ENCODE measurements at regions of chr6 and their contacts with region 1.

Region 1: GRCh38 chr6:141988954-141989705 is 143.6 kb upstream of the GJE1 start:
- DNase-seq: peak; percentile 39 to 45
- H3K4me3 ChIP-seq: no peak overlapping the region
- H3K27ac ChIP-seq: no peak overlapping the region
- H3K4me1 ChIP-seq: no peaks in the 10 kb centered on the region
- H3K27me3 ChIP-seq: no peaks in the 10 kb centered on the region
- CTCF ChIP-seq: peak; percentile 82

Region 2: DNA sequence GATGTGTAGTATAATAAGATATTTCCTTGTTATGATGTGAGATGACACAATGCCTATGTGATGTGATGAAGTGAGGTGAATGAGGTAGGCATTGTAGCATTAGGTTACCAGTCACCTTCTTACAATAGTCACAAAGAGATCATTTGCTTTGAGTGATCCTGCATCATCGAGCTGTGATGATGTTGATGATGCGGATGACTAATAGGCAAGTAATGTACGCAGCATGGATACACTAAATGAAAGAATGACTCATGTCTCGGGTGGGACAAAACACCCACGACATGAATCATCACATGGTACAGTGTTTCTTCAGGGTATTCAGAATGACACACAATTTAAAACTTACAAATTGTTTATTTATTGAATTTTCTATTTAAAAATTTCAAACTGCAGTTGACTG is 662.7 kb before region 1 on chr6:
- CTCF ChIA-PET with region 1: no interaction called
- POLR2A ChIA-PET with region 1: no interaction called
- intact Hi-C with region 1: no loop called
- DNase-seq: peak; percentile 61 to 95
- H3K4me3 ChIP-seq: peak overlapping the region; percentile 34; the same call in 1 of the 2 replicates
- H3K27ac ChIP-seq: peak overlapping the region; percentile 83
- H3K4me1 ChIP-seq: peaks cover 7% of the 10 kb centered on the region
- H3K27me3 ChIP-seq: no peaks in the 10 kb centered on the region
- CTCF ChIP-seq: no peak

Region 3: DNA sequence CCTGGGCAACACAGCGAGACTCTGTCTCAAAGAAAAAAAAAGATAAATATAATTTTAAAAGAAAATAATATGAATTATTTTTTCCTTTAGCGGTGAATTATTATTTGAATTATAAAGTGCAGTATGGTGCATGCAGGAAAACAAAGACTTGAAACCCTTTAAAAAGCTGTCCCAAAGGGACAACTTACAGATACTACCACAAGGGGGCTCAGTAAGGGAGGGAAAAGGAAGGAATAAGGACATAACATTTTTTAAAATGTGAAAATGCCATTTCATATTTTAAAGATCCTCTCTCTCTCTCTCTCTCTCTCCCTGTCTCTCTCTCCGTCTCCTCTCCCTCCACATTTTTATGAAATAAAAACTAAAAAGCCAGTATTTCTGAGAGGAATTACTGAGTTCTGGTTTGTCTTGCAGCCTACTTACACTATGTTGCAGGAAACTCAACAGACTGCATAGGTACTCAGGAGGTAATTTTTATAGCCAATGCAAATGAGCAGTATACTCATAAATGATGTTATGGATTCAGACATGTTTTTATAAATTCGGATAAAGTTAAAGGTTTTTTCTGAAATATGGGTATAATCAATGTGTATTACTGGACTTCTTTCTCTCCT is 311.4 kb before region 1 on chr6:
- CTCF ChIA-PET with region 1: no interaction called
- POLR2A ChIA-PET with region 1: no interaction called
- intact Hi-C with region 1: loop called (anchors 10 kb)
- DNase-seq: no peak
- H3K4me3 ChIP-seq: no peak overlapping the region
- H3K27ac ChIP-seq: no peak overlapping the region
- H3K4me1 ChIP-seq: no peaks in the 10 kb centered on the region
- H3K27me3 ChIP-seq: no peaks in the 10 kb centered on the region
- CTCF ChIP-seq: peak; percentile 66

Region 4: GRCh38 chr6:142045380-142046278 is 56.5 kb after region 1 on chr6:
- CTCF ChIA-PET with region 1: no interaction called
- POLR2A ChIA-PET with region 1: no interaction called
- intact Hi-C with region 1: loop called (anchors 1 kb)
- DNase-seq: no peak
- H3K4me3 ChIP-seq: no peak overlapping the region
- H3K27ac ChIP-seq: no peak overlapping the region
- H3K4me1 ChIP-seq: no peaks in the 10 kb centered on the region
- H3K27me3 ChIP-seq: no peaks in the 10 kb centered on the region
- CTCF ChIP-seq: peak; percentile 50

Region 5: GRCh38 chr6:142112451-142113061 is 123.4 kb after region 1 on chr6:
- CTCF ChIA-PET with region 1: interaction called, 3 read pairs
- POLR2A ChIA-PET with region 1: interaction called, 6 read pairs
- intact Hi-C with region 1: loop called (anchors 1 kb)
- DNase-seq: peak; percentile 58 to 60
- H3K4me3 ChIP-seq: no peak overlapping the region
- H3K27ac ChIP-seq: no peak overlapping the region
- H3K4me1 ChIP-seq: no peaks in the 10 kb centered on the region
- H3K27me3 ChIP-seq: no peaks in the 10 kb centered on the region
- CTCF ChIP-seq: peak; percentile 89